ENCODE measurements at regions of chr1 and their contacts with region 1.

Region 1: GRCh38 chr1:47725992-47726855 is 271.0 kb downstream of the TRABD2B start:
- ATAC-seq: peak; percentile 91 to 96 (median 94)
- H3K4me3 ChIP-seq: peak overlapping the region in 2 of 5 donors; percentile 2 to 15
- H3K27ac ChIP-seq: no peak overlapping the region
- H3K4me1 ChIP-seq: peaks cover 0 to 15% of the 10 kb centered on the region in 2 donors

Region 2: DNA sequence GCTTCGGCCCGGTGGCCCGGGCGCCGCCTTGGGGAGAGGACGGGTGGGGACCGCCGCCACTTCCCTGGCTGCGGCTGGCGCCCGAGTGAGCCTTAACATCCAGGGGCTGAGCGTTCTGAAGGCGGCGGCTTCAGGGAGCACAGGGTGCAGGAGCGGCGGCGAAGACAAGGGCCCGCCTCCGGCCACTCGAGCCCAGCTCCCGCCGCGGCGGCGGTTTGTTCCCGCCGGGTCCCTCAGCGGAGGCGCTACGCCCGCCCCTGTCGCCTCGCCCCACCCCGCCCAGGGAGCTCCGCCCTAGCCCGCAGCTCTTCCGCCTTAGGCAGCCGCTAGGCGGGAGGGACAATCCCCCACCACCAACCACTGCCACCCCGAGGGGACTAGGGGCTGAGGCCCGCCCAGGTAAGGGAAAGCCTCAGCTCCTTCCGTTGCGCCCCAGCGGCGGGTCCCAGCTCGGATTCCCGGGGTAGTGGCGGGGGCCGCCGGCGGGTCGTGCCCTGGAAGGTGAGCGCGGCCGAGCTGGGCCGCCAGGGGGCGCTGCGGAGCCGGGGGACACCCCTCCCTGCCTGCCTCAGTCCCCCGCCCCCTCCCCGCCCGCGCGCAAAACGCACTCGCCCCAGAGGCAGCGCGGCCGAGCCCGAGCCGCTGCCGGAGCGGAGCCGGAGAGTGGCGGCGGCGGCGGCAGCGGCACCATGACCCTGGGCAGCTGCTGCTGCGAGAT is 288.6 kb before region 1 on chr1 and contains the start of gene FOXD2:
- in situ Hi-C with region 1: loop called in 1 of 9 experiments (anchors 10 kb)
- ATAC-seq: peak; percentile 74 to 90 (median 86)
- H3K4me3 ChIP-seq: peak within 1 kb of the TSS; percentile 21 to 61 (median 47)
- H3K27ac ChIP-seq: no peak within 1 kb of the TSS
- H3K4me1 ChIP-seq: peaks cover 2 to 17% of the 10 kb centered on the region in 2 donors
- total RNA-seq, gene FOXD2: 0.05 to 1.6 (median 0.30) TPM in 6 of 8 experiments, not detected in the others

Region 3: GRCh38 chr1:48039088-48040054 is 313.1 kb after region 1 on chr1:
- in situ Hi-C with region 1: loop called in 2 of 9 experiments (anchors 10 to 25 kb)
- ATAC-seq: peak; percentile 37 to 75 (median 68)
- H3K4me3 ChIP-seq: no peak overlapping the region
- H3K27ac ChIP-seq: no peak overlapping the region
- H3K4me1 ChIP-seq: peaks cover 29 to 39% of the 10 kb centered on the region in 2 donors

Region 4: GRCh38 chr1:48202030-48202752 is 476.0 kb after region 1 on chr1:
- in situ Hi-C with region 1: loop called in 3 of 9 experiments (anchors 25 kb)
- ATAC-seq: peak; percentile 37 to 99 (median 80)
- H3K4me3 ChIP-seq: no peak overlapping the region
- H3K27ac ChIP-seq: no peak overlapping the region
- H3K4me1 ChIP-seq: peaks cover 0 to 5% of the 10 kb centered on the region in 2 donors

Measured in motor neuron (in vitro differentiated cells).